AG04449 (cell line): ENCODE measurements at regions of chr1 and their contacts with region 1.

Region 1: GRCh38 chr1:92858564-92859399 is 26.9 kb downstream of the RPL5 start:
- DNase-seq: peak; percentile 53
- H3K4me3 ChIP-seq: no peak overlapping the region
- CTCF ChIP-seq: peak; percentile 74

Region 2: DNA sequence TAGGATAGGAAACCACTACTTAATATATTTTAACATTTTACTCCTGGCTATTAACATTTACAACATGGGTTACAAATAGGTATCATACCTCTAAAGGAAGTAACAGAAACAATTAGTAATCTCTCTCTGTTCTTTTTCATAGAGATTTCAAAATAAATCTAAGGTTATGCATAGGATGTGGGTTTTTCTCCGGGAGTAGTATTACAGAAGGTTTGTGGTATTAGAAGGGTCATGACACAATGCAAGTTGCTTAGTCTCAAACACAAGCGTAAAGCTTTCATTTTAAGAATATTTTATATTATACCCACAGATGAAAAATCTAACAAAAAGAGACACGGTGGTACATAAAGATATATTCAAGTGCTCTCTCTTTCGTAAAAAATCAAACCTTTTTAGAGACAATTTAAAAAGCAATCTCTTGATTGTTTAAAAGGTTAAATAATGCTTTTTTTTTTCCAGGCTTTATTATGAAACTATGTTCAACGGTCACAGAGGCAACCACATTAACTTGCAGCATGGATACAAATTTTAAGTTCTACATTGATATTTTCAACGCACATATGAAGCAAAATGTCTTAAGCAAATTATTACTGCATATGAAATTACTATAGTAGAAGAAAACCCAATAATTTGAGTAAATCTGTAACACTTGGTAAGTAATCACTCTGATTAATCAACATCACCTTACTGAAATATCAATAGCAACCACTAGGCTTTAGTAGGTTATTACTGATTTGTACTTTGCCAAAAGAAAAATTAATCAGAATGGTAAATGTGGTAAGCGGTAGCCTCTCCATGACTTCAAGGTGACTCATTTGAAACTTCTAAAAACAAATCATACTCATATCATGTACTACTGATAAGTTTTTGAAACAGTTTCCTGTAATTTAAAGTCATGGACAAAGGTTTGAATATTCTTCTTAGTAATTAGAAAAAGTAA is 274.7 kb before region 1 on chr1:
- CTCF ChIA-PET with region 1: no interaction called
- POLR2A ChIA-PET with region 1: no interaction called
- DNase-seq: peak; percentile 7
- H3K4me3 ChIP-seq: no peak overlapping the region
- CTCF ChIP-seq: no peak

Region 3: GRCh38 chr1:92872719-92873118 is 13.9 kb after region 1 on chr1:
- CTCF ChIA-PET with region 1: interaction called, 51 read pairs
- POLR2A ChIA-PET with region 1: no interaction called
- DNase-seq: no peak
- H3K4me3 ChIP-seq: no peak overlapping the region
- CTCF ChIP-seq: no peak

Region 4: DNA sequence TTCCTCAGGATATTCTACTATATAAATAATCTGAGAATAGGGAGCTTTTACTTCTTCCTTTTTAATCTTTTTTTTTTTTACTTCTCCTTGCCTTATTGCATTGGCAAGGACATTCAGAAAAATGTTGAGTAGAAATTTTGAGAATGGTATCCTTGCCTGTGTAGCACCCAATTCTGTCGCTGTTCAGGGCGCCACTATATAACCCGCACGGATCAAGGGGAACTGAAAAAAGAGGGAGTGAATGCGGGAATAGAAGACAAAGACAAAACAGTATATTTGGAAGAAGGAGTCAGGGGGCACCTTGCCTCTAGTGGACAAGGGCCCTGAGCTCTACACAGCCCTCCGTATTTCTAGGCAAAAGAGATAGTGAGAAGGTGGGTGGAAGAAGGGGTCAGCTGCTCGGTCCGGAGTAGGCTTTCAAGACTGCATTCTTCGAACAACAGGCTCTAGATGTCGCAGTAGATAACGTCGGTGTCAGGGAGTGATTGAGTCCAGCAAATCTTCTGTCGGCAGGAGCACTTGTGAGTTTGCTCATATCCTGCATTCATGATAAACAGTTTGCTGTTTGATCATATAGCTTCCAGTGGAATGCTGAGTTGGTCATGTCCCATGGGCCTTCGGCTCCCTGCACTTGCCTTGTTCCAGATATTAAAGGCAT is 65.6 kb after region 1 on chr1:
- CTCF ChIA-PET with region 1: interaction called, 10 read pairs
- POLR2A ChIA-PET with region 1: no interaction called
- DNase-seq: no peak
- H3K4me3 ChIP-seq: no peak overlapping the region
- CTCF ChIP-seq: no peak

Region 5: GRCh38 chr1:92960395-92961130 is 101.8 kb after region 1 on chr1:
- CTCF ChIA-PET with region 1: interaction called, 97 read pairs
- POLR2A ChIA-PET with region 1: no interaction called
- DNase-seq: peak; percentile 41
- H3K4me3 ChIP-seq: peak overlapping the region; percentile 79
- CTCF ChIP-seq: peak; percentile 75

Region 6: GRCh38 chr1:92980732-92981647 is 122.2 kb after region 1 on chr1:
- CTCF ChIA-PET with region 1: interaction called, 24 read pairs
- POLR2A ChIA-PET with region 1: no interaction called
- DNase-seq: no peak
- H3K4me3 ChIP-seq: no peak overlapping the region
- CTCF ChIP-seq: no peak

Region 7: DNA sequence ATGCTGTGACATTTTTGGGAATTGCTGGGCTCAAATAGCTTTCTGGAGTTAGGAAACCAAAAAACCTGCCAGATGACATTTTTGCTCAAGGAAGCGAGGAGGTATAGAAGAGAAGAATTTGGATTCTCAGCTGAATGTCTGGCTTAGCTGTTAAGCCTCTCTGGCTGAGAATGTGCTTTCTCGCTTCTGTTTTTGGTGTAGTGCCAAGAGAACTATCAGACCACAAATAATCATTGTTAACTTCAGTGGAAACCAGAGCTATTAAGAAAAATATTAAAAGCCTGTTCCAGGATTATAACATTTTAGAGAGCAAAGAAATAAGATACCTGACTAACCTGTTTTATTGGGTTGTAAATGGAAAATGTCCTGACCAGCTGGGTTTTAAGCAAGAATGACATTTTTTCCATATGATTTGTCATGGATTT is 142.0 kb after region 1 on chr1:
- CTCF ChIA-PET with region 1: interaction called, 65 read pairs
- POLR2A ChIA-PET with region 1: no interaction called
- DNase-seq: no peak
- H3K4me3 ChIP-seq: no peak overlapping the region
- CTCF ChIP-seq: no peak

Region 8: GRCh38 chr1:93061895-93062792 is 203.4 kb after region 1 on chr1:
- CTCF ChIA-PET with region 1: interaction called, 33 read pairs
- POLR2A ChIA-PET with region 1: no interaction called
- DNase-seq: no peak
- H3K4me3 ChIP-seq: no peak overlapping the region
- CTCF ChIP-seq: peak; percentile 26